Activated CD4-positive, alpha-beta T cell treated with anti-CD3 and anti-CD28 coated beads for 36 hours (primary cell): ENCODE measurements at regions of chr4 and their contacts with region 1.

Region 1: DNA sequence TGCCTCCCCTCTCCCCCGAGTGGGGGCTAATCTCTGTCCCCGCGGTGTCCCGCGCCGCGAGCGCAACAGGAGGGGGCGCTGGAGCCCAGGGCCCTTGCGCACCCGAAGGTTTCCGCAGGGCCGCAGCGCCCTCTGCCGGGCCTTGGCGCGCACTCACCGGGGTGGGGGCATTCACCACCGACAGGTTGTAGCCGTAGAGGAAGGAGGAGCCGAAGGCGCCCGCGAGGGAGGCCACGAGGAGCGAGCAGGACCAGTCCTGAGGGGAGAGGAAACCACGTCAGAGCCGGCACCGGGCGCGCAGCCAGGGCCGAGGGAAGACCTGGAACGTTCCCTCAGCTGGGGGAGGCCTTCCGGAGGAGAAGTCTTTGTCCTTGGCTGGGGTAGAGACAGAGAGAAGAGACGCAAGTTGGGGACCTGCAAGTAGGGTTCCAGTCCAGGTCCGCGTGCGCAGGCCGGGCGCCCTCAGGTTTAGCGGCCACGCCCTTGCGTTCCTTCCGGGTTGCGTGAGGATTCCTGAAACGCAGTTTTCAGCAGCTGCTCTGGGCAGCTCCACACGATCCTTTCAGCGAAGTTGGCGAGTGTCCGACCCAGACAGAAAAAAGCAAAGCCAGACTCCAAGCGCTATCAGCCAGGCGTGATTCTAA is 2.4 kb downstream of the SLC2A9 start:
- DNase-seq: peak; percentile 97
- ATAC-seq: peak; percentile 100
- H3K4me3 Mint-ChIP-seq: peak overlapping the region; percentile 77
- H3K27ac Mint-ChIP-seq: peak overlapping the region; percentile 81
- H3K4me1 Mint-ChIP-seq: peaks cover 6% of the 10 kb centered on the region
- H3K27me3 Mint-ChIP-seq: no peaks in the 10 kb centered on the region

Region 2: GRCh38 chr4:9691238-9692065 is 327.5 kb before region 1 on chr4:
- CTCF ChIA-PET with region 1: interaction called, 3 read pairs
- POLR2A ChIA-PET with region 1: no interaction called
- intact Hi-C with region 1: loop called (anchors 1 kb)
- DNase-seq: peak; percentile 95
- ATAC-seq: peak; percentile 100
- H3K4me3 Mint-ChIP-seq: peak overlapping the region; percentile 76
- H3K27ac Mint-ChIP-seq: peak overlapping the region; percentile 76
- H3K4me1 Mint-ChIP-seq: peaks cover 23% of the 10 kb centered on the region
- H3K27me3 Mint-ChIP-seq: no peaks in the 10 kb centered on the region

Region 3: DNA sequence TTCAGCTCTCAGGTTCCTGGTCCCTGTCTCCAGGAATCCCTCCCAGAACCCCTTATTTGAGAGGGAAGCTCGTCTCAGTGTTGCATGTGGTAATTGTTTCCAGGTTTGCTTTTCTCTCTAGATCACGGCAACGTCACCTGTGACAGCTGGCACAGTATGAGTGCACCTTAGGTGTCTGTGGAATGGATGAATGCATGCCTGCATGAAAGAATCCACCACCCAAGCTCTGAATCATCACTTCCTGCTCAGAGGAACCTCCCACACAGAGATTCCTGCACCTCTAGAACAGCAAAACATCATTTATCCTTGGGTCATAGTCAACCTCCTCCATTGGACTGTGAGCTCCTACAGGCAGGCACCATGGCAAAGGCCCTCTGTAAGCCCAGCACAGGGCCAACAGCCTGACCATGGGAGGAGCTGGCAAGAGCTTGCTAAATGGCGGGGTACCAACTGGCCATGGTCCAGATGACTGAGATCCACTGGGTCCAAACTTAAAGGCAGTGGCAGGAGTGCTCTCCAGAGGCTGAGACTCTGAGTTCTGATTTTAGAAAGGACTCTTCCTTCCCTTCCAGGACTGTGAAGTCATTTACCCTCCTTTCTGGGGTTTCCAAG is 113.9 kb before region 1 on chr4:
- CTCF ChIA-PET with region 1: interaction called, 3 read pairs
- POLR2A ChIA-PET with region 1: no interaction called
- intact Hi-C with region 1: loop called in 1 of 2 experiments (anchors 10 kb)
- DNase-seq: peak; percentile 47
- ATAC-seq: peak; percentile 95
- H3K4me3 Mint-ChIP-seq: no peak overlapping the region
- H3K27ac Mint-ChIP-seq: no peak overlapping the region
- H3K4me1 Mint-ChIP-seq: peaks cover 6% of the 10 kb centered on the region
- H3K27me3 Mint-ChIP-seq: no peaks in the 10 kb centered on the region

Region 4: GRCh38 chr4:10045481-10045880 is 26.5 kb after region 1 on chr4:
- CTCF ChIA-PET with region 1: no interaction called
- POLR2A ChIA-PET with region 1: no interaction called
- intact Hi-C with region 1: no loop called
- DNase-seq: no peak
- ATAC-seq: no peak
- H3K4me3 Mint-ChIP-seq: no peak overlapping the region
- H3K27ac Mint-ChIP-seq: no peak overlapping the region
- H3K4me1 Mint-ChIP-seq: no peaks in the 10 kb centered on the region
- H3K27me3 Mint-ChIP-seq: no peaks in the 10 kb centered on the region

Region 5: GRCh38 chr4:10403633-10404445 is 384.9 kb after region 1 on chr4:
- CTCF ChIA-PET with region 1: no interaction called
- POLR2A ChIA-PET with region 1: no interaction called
- intact Hi-C with region 1: loop called in 1 of 2 experiments (anchors 1 kb)
- DNase-seq: peak; percentile 7
- ATAC-seq: no peak
- H3K4me3 Mint-ChIP-seq: no peak overlapping the region
- H3K27ac Mint-ChIP-seq: no peak overlapping the region
- H3K4me1 Mint-ChIP-seq: no peaks in the 10 kb centered on the region
- H3K27me3 Mint-ChIP-seq: no peaks in the 10 kb centered on the region